ENCODE measurements at regions of chr2 and their contacts with region 1.

Region 1: DNA sequence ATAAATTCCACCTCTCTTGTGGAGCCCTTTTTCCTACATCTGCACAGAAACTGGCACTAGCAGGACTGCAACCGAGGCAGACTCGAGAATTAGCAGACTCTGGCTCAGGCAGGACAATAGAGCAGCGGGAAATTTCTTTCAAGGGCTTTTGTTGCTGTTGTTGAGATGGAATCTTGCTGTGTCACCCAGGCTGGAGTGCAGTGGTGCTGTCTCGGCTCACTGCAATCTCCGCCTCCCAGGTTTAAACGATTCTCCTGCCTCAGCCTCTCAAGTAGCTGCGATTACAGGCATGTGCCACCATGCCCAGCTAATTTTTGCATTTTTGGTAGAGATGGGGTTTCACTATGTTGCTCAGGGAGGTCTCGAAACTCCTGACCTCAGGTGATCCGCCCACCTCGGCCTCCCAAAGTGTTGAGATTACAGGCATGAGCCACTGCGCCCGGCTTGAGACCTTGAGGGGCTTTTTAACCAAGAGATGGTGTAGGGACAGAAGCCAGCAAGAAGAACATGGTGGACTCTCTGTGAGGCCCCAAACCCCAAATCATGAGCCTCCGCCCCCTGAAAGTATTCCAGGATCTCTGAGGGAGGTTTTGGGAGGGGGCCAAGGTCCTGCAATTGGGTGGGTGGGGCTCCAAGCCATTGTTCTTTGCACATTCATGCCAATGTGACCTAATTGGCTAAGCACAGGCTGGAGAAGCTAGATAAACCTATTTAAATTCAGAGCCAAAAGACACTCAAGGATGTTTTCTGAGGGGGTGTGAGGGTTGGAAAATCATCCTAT is 68.4 kb upstream of the MSH2 start:
- DNase-seq: no peak
- H3K4me3 ChIP-seq: no peak overlapping the region
- H3K27ac ChIP-seq: no peak overlapping the region
- H3K4me1 ChIP-seq: peaks cover 0 to 13% of the 10 kb centered on the region in 2 donors
- H3K27me3 ChIP-seq: no peaks in the 10 kb centered on the region
- CTCF ChIP-seq: no peak
- POLR2A ChIP-seq: no peak

Region 2: DNA sequence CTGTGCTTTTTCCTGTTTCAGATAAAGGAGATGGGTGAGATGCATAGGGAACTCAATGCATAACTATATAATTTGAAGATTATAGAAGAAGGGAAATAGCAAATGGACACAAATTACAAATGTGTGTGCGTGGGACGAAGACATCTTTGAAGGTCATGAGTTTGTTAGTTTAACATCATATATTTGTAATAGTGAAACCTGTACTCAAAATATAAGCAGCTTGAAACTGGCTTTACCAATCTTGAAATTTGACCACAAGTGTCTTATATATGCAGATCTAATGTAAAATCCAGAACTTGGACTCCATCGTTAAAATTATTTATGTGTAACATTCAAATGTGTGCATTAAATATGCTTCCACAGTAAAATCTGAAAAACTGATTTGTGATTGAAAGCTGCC is 52.0 kb after region 1 on chr2:
- intact Hi-C with region 1: loop called (anchors 2 kb)
- DNase-seq: no peak
- H3K4me3 ChIP-seq: no peak overlapping the region
- H3K27ac ChIP-seq: no peak overlapping the region
- H3K4me1 ChIP-seq: no peaks in the 10 kb centered on the region
- H3K27me3 ChIP-seq: no peaks in the 10 kb centered on the region
- CTCF ChIP-seq: no peak
- POLR2A ChIP-seq: no peak

Measured in adrenal gland (tissue), 19 donors.